ENCODE measurements at regions of chr16 and their contacts with region 1.

Region 1: DNA sequence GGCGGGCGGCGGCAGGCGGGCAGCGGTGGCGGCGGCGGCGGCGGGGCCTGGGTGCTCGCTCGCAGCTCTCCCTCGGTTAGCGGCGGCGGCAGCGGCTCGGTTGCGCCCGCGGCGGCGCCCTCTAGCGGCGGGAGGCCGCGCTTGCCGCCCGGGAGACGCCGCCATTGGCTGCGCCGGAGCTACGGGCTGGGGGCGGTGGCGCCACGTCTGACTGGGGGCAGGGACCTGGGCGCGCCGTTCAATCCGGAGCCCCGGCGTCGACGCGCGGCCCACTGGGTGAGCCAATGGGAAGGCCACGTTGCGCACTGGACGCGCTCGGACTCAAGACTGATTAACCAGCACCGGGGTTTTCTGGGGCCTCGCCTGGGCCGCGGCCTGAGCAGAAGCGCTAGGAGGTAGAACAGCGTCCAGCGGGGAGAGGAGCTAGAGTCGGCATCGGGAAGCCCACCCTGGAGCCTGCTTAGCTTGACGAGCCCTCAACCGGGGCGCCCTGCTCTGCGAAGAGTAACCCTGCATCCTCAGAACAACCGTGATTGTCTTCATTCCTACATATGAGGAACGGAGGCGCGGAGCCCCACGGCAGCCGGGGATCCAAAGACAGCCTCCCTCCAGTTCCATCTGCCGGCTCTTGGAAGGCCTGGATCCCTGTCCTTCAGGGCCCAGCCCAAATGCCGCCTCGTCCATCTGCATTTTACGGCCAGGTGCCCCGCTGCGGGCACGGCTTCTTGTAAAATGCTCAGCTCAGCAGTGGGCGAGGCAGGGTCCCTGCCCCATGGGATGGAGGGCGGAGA is at the start of gene ZC3H7A:
- DNase-seq: peak; percentile 97
- ATAC-seq: peak; percentile 95
- H3K4me3 Mint-ChIP-seq: peak within 1 kb of the TSS; percentile 92
- H3K27ac Mint-ChIP-seq: peak within 1 kb of the TSS; percentile 94
- H3K4me1 Mint-ChIP-seq: peaks cover 68% of the 10 kb centered on the region
- H3K27me3 Mint-ChIP-seq: no peaks in the 10 kb centered on the region
- total RNA-seq, gene ZC3H7A: 74.1 to 95.1 TPM

Region 2: GRCh38 chr16:10743610-10744393 is 1053.6 kb before region 1 on chr16 and contains the start of gene NUBP1:
- CTCF ChIA-PET with region 1: no interaction called
- POLR2A ChIA-PET with region 1: no interaction called
- intact Hi-C with region 1: loop called in 1 of 2 experiments (anchors 5 kb)
- DNase-seq: peak; percentile 100
- ATAC-seq: peak; percentile 95
- H3K4me3 Mint-ChIP-seq: peak within 1 kb of the TSS; percentile 75
- H3K27ac Mint-ChIP-seq: peak within 1 kb of the TSS; percentile 98
- H3K4me1 Mint-ChIP-seq: peaks cover 30% of the 10 kb centered on the region
- H3K27me3 Mint-ChIP-seq: no peaks in the 10 kb centered on the region
- total RNA-seq, gene NUBP1: 25.9 to 33.1 TPM

Region 3: GRCh38 chr16:11586856-11587642 is 210.3 kb before region 1 on chr16 and contains the start of gene LITAF:
- CTCF ChIA-PET with region 1: interaction called, 3 read pairs
- POLR2A ChIA-PET with region 1: no interaction called
- intact Hi-C with region 1: loop called (anchors 5 kb)
- DNase-seq: peak; percentile 74
- ATAC-seq: peak; percentile 53
- H3K4me3 Mint-ChIP-seq: peak within 1 kb of the TSS; percentile 89
- H3K27ac Mint-ChIP-seq: peak within 1 kb of the TSS; percentile 90
- H3K4me1 Mint-ChIP-seq: peaks cover 32% of the 10 kb centered on the region
- H3K27me3 Mint-ChIP-seq: no peaks in the 10 kb centered on the region
- total RNA-seq, gene LITAF: 99.0 to 116 TPM

Region 4: DNA sequence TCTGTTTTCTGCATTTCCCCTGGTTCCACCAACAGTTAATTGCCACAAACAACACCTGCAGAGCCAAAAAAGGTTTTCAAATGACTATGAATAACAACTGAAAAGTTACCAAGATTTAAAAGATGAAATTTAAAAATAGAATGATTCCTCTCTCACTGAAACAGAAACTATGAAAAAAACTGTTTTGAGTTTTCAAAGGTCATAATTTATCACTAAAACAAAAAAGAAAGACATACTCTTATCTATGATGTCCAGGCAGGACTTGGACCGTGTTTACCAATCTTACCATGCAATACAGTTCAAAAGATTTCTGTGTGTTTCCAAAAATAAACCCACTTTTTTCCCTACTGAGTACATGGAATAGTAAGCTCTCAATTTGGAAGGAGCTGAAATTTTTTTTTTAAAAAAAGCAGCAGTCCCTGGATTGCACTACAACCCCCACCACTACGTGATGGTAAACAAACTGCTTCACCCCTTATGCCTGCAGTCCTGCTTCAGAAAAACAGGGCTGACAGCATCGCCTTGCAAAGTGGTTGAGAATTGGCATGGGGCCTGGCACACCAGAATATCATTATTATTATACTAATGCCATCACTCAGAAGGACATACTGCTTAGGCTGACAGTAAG is 63.2 kb before region 1 on chr16:
- CTCF ChIA-PET with region 1: interaction called, 11 read pairs
- POLR2A ChIA-PET with region 1: no interaction called
- intact Hi-C with region 1: no loop called
- DNase-seq: no peak
- ATAC-seq: peak; percentile 23
- H3K4me3 Mint-ChIP-seq: no peak overlapping the region
- H3K27ac Mint-ChIP-seq: peak overlapping the region; percentile 74
- H3K4me1 Mint-ChIP-seq: peaks cover 51% of the 10 kb centered on the region
- H3K27me3 Mint-ChIP-seq: no peaks in the 10 kb centered on the region

Region 5: DNA sequence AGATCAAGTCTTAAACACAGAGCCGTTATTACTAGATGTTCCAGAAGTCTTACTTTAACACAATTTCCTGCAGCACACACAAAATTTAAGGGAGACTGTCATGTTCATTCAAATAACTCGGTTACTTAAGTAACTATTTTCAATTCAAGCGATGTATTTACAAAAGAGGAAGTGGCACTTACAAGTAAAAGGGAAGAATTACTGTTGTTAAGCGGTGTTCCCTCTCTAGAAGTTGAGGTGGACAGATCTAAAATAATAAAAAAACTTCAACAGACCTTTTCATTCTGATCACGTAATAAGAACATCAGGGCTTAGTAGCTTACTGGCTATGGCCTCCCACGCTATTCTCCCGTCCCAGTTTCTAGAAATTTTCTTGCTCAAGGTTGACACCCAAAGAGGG is 28.5 kb before region 1 on chr16:
- CTCF ChIA-PET with region 1: interaction called, 11 read pairs
- POLR2A ChIA-PET with region 1: no interaction called
- intact Hi-C with region 1: no loop called
- DNase-seq: no peak
- ATAC-seq: no peak
- H3K4me3 Mint-ChIP-seq: no peak overlapping the region
- H3K27ac Mint-ChIP-seq: peak overlapping the region; percentile 23
- H3K4me1 Mint-ChIP-seq: peaks cover 13% of the 10 kb centered on the region
- H3K27me3 Mint-ChIP-seq: no peaks in the 10 kb centered on the region

Region 6: DNA sequence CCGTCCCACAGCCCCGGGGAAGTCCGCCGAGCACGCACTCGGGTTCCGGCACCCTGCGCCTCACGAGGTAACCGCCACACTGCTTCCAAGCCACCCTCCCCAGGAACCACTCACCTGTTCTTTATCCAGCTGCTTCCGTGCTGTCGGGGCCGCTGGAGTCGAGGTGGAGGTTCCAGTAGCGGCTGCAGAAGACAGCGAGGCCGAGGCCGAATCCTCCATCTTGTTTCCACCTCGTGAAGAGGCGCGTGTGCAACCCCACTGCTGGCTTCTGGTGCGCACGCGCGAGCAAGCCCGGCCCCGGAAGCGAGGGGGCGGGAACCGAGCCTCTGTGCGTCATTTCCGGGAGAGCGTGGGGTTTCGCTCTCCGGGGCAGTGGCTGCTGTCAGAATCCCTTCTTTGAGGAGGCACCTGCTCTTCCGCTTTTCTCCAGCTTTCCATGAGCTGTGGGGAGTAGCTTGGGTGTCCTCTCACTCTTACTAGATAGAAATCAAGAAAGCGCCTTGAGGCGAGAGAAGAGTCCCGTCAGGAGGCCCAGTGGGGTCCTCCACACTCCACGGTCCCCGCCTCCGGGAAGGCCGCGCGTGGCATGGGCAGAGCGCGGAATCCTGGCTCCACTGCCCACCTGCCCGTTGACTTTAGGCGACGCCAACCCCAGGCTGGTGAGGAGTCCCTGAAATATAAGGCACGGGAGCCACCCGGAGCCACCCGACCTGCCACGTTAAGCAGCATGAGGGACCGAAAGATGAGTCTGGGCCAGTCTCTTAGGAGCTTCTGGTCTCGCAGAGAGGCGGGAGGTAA is 54.1 kb after region 1 on chr16 and contains the start of gene RSL1D1:
- CTCF ChIA-PET with region 1: interaction called, 10 read pairs
- POLR2A ChIA-PET with region 1: no interaction called
- intact Hi-C with region 1: loop called (anchors 1 kb)
- DNase-seq: peak; percentile 96
- ATAC-seq: peak; percentile 85
- H3K4me3 Mint-ChIP-seq: peak within 1 kb of the TSS; percentile 99
- H3K27ac Mint-ChIP-seq: peak within 1 kb of the TSS; percentile 96
- H3K4me1 Mint-ChIP-seq: peaks cover 52% of the 10 kb centered on the region
- H3K27me3 Mint-ChIP-seq: no peaks in the 10 kb centered on the region
- total RNA-seq, gene RSL1D1: 369 to 466 TPM

Region 7: DNA sequence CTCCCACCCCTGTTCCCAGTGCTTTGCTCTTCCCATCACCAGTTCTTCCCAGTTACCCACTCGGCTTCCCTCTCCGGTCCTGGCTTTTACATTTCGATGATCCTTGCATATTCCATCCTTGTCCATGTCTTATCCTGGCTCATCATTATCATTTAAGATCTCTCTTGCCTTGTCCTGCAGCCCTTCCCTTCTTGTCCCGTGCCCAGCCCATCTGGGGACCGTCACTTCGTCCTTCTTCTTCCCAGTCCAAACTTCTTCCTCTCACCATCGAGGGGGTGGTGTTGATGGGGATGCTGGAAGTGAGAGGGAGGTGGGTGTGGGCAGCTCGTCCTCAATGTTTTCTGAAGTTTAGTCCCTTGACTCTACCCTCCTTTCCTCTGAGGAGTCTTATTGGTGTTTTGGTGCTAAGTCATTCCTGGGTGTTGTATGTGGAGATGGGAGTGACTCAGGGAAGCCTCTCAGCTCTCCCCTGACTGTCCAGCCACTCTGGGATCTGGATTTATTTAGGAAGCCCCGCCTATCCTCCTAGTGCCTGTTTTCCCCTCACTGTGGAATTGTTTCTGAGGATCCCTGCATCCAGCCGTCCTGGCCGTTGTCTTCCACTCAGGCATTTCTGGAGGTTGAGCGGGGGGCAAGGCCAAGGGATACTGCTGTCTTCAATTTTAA is 180.1 kb after region 1 on chr16:
- CTCF ChIA-PET with region 1: no interaction called
- POLR2A ChIA-PET with region 1: no interaction called
- intact Hi-C with region 1: loop called in 1 of 2 experiments (anchors 1 kb)
- DNase-seq: no peak
- ATAC-seq: no peak
- H3K4me3 Mint-ChIP-seq: peak overlapping the region; percentile 88
- H3K27ac Mint-ChIP-seq: peak overlapping the region; percentile 30
- H3K4me1 Mint-ChIP-seq: peaks cover 39% of the 10 kb centered on the region
- H3K27me3 Mint-ChIP-seq: no peaks in the 10 kb centered on the region

Region 8: DNA sequence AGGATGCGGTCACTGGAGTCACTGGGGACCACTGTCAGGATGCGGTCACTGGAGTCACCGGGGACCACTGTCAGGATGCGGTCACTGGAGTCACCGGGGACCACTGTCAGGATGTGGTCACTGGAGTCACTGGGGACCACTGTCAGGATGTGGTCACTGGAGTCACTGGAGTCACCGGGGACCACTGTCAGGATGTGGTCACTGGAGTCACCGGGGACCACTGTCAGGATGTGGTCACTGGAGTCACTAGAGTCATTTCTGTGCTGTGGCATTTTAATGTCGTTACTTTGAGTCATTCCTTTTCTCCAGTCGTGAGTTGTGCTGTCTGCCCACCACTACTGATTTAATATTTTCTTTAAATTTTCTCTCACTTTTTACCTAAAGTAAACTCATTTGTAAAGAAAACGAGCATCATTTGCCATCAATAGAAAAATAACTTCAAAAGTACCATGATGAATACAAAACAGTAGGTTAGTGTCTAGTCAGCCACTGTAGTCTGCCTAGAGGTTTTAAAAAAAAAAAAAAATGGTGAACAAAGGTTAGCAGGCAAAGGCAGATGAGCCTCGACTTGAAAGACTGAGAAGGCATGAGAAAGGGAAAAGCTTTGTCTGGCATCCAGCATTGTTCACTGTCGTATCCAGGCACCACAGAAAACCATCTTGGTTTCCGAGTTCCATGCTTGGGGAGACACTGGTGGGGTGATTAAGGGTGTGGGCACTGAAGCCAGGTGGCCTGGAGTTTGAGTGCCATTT is 525.8 kb after region 1 on chr16:
- CTCF ChIA-PET with region 1: no interaction called
- POLR2A ChIA-PET with region 1: no interaction called
- intact Hi-C with region 1: no loop called
- DNase-seq: peak; percentile 76
- ATAC-seq: peak; percentile 90
- H3K4me3 Mint-ChIP-seq: no peak overlapping the region
- H3K27ac Mint-ChIP-seq: peak overlapping the region; percentile 53
- H3K4me1 Mint-ChIP-seq: peaks cover 15% of the 10 kb centered on the region
- H3K27me3 Mint-ChIP-seq: no peaks in the 10 kb centered on the region

Region 9: GRCh38 chr16:12496186-12496585 is 698.8 kb after region 1 on chr16:
- CTCF ChIA-PET with region 1: no interaction called
- POLR2A ChIA-PET with region 1: no interaction called
- intact Hi-C with region 1: no loop called
- DNase-seq: no peak
- ATAC-seq: no peak
- H3K4me3 Mint-ChIP-seq: no peak overlapping the region
- H3K27ac Mint-ChIP-seq: no peak overlapping the region
- H3K4me1 Mint-ChIP-seq: peaks cover 8% of the 10 kb centered on the region
- H3K27me3 Mint-ChIP-seq: no peaks in the 10 kb centered on the region